Activated CD4-positive, alpha-beta T cell treated with anti-CD3 and anti-CD28 coated beads, Interleukin-2, amount 10 ng/mL, durations not matched to agents 24 days and 14 days (primary cell): ENCODE measurements at regions of chr19 and their contacts with region 1.

Region 1: DNA sequence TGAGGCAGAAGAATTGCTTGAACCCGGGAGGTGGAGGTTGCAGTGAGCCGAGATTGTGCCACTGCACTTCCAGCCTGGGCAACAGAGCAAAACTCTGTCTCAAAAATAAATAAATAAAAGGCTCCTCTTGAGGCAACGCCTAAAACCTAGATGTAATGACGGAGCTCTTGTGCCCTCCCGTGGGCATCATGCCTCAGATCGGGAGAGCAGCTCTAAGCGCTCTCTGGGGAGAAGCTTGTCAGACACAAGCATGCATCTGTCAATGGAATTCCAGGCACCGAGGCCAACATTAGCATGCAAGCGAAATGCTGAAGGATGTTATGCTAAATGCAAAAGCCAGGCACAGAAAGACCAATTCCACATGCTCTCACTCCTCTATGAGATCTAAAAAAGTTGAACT is 45.6 kb upstream of the MRI1 start:
- DNase-seq: no peak
- H3K4me3 Mint-ChIP-seq: no peak overlapping the region
- H3K27ac Mint-ChIP-seq: no peak overlapping the region
- H3K4me1 Mint-ChIP-seq: no peaks in the 10 kb centered on the region
- H3K27me3 Mint-ChIP-seq: peaks cover 11% of the 10 kb centered on the region

Region 2: DNA sequence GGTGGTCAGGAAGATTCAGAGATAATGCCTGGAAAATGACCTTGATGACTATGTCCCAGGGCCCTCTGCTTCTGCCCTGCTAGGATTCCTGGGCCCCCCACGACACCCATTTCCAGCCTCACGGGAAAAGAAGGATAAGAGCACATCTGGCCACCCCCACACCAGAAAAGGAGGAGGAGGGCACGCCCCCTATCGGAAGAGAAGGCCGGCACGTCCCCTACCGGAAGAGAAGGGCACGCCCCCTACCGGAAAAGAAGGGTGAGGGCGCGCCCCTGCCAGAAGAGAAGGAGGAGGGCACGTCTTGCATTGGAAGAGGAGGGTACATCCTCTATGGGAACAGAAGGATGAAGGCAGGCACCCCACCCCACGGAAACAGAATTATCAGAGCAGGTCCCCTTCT is 484.2 kb before region 1 on chr19:
- intact Hi-C with region 1: no loop called
- DNase-seq: peak; percentile 81
- H3K4me3 Mint-ChIP-seq: peak overlapping the region; percentile 6
- H3K27ac Mint-ChIP-seq: peak overlapping the region; percentile 25
- H3K4me1 Mint-ChIP-seq: peaks cover 6% of the 10 kb centered on the region
- H3K27me3 Mint-ChIP-seq: peaks cover 6% of the 10 kb centered on the region

Region 3: GRCh38 chr19:13597640-13598039 is 121.1 kb before region 1 on chr19:
- intact Hi-C with region 1: loop called (anchors 5 kb)
- DNase-seq: peak; percentile 85
- H3K4me3 Mint-ChIP-seq: no peak overlapping the region
- H3K27ac Mint-ChIP-seq: no peak overlapping the region
- H3K4me1 Mint-ChIP-seq: peaks cover 2% of the 10 kb centered on the region
- H3K27me3 Mint-ChIP-seq: no peaks in the 10 kb centered on the region

Region 4: GRCh38 chr19:15037586-15037985 is 1318.9 kb after region 1 on chr19:
- intact Hi-C with region 1: no loop called
- DNase-seq: no peak
- H3K4me3 Mint-ChIP-seq: no peak overlapping the region
- H3K27ac Mint-ChIP-seq: no peak overlapping the region
- H3K4me1 Mint-ChIP-seq: no peaks in the 10 kb centered on the region
- H3K27me3 Mint-ChIP-seq: no peaks in the 10 kb centered on the region